Activated CD4-positive, alpha-beta memory T cell treated with anti-CD3 and anti-CD28 coated beads, Interleukin-2, amount 10 ng/mL, durations not matched to agents 7 days and 5 days (primary cell): ENCODE measurements at regions of chr16 and their contacts with region 1.

Region 1: DNA sequence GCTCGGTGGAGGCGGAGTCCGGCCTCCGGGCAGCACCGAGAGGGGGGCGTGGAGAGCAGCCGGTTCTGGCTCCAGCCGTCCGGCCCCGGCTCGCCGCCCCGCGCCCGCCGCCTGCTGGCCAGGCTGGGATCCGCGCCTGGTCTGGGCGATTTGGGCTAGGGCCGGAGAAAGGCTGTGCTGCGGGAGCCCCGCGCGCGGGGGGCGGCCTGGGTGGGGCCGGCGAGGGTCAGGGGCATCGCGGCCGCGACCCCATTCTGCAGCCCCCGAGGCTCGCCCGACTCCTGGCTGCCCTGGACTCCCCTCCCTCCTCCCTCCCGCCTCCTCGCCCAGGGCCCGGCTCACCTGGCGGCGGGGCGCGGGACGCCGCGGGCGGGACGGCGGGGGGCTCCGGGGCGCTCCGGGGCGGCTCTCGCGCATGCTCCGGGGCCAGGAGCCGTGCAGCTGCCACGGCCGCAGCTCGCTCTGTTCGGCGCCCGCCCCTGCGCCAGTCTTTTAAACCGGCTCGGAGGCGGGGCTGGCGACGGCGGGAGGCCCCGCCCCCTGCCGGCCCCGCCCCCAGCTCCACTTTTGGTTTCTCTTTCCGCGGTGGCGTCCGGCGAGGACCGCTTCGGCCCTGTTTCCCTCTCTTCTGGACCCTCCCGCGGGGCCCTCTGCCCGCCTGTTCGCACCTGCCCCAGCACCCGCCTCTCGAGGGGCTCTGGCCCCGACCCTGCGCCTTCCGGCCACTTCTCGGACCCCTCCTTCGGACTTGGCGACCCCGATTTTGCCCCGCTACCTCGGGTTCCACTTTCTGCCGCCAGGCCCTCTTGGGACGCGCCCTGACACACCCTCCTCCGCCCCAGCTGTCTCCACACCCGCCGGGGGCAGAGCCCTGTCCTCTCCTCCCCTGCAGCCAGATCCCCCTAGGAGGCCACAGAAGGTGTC is at the start of gene SOCS1:
- DNase-seq: peak; percentile 92
- H3K4me3 Mint-ChIP-seq: peak within 1 kb of the TSS; percentile 94
- H3K27ac Mint-ChIP-seq: peak within 1 kb of the TSS; percentile 94
- H3K4me1 Mint-ChIP-seq: peaks cover 51% of the 10 kb centered on the region
- H3K27me3 Mint-ChIP-seq: peaks cover 12% of the 10 kb centered on the region
- total RNA-seq, gene SOCS1: 136 to 142 TPM

Region 2: GRCh38 chr16:10981697-10982216 is 274.2 kb before region 1 on chr16:
- CTCF ChIA-PET with region 1: interaction called, 50 read pairs
- POLR2A ChIA-PET with region 1: interaction called, 309 read pairs
- DNase-seq: peak; percentile 77
- H3K4me3 Mint-ChIP-seq: peak overlapping the region; percentile 60
- H3K27ac Mint-ChIP-seq: peak overlapping the region; percentile 87
- H3K4me1 Mint-ChIP-seq: peaks cover 90% of the 10 kb centered on the region
- H3K27me3 Mint-ChIP-seq: no peaks in the 10 kb centered on the region

Region 3: DNA sequence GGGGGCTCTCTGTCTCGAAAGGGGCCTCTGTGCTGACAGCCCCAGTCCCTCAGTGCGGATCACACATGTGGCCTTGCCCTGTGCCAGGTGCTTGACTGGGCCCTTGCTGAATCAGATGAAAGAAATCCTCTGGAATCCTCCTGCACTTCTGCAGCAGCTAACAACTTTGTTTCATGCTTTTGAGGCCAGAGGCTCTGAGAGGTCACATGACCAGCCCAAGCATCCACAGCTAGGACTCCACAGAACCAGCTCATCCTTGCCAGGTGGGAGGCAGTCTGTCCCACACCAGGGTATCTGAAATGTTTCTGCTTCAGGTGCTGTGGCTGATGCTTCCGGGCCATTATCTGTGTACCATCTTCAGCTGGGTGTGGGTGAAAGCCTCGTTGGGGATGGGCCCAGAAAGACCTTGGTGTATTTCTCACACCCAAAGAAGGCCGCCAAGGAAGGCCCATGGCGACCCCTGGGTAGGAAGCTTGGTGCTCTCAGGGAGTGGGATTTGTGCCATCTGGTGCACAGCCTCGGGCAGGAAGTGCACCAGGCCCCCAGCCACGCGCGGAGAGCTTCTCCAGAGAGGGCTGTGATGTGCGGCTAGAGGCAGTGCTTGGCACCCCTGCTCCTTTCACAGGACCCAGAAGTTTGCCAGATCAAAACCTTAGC is 167.8 kb before region 1 on chr16:
- CTCF ChIA-PET with region 1: interaction called, 4 read pairs
- POLR2A ChIA-PET with region 1: interaction called, 46 read pairs
- DNase-seq: peak; percentile 52
- H3K4me3 Mint-ChIP-seq: no peak overlapping the region
- H3K27ac Mint-ChIP-seq: peak overlapping the region; percentile 76
- H3K4me1 Mint-ChIP-seq: peaks cover 75% of the 10 kb centered on the region
- H3K27me3 Mint-ChIP-seq: no peaks in the 10 kb centered on the region

Region 4: DNA sequence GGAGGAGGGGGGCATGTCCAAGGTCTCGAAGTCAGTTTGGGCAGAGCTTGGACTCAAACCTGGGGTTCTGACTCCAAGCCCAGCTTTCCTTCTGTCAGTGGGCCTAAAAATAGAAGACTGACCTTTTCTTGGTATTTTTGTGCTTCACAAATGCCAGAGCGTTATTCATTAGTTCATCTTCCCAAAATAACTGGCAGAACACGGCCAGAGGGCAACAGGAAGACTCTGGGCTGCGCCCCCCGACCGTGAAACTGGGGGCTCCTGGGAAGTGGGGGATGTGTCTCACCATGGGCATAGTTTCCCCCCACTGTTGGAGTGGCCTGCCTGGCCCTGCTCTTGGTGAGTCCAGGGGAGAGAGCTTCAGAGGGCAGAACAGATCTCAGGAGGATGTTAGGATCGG is 94.0 kb before region 1 on chr16:
- CTCF ChIA-PET with region 1: interaction called, 19 read pairs
- POLR2A ChIA-PET with region 1: interaction called, 28 read pairs
- DNase-seq: no peak
- H3K4me3 Mint-ChIP-seq: no peak overlapping the region
- H3K27ac Mint-ChIP-seq: peak overlapping the region; percentile 70
- H3K4me1 Mint-ChIP-seq: peaks cover 88% of the 10 kb centered on the region
- H3K27me3 Mint-ChIP-seq: no peaks in the 10 kb centered on the region

Region 5: GRCh38 chr16:11232852-11233726 is 22.9 kb before region 1 on chr16:
- CTCF ChIA-PET with region 1: interaction called, 23 read pairs
- POLR2A ChIA-PET with region 1: interaction called, 302 read pairs
- DNase-seq: peak; percentile 95
- H3K4me3 Mint-ChIP-seq: peak overlapping the region; percentile 66
- H3K27ac Mint-ChIP-seq: peak overlapping the region; percentile 98
- H3K4me1 Mint-ChIP-seq: peaks cover 86% of the 10 kb centered on the region
- H3K27me3 Mint-ChIP-seq: no peaks in the 10 kb centered on the region

Region 6: DNA sequence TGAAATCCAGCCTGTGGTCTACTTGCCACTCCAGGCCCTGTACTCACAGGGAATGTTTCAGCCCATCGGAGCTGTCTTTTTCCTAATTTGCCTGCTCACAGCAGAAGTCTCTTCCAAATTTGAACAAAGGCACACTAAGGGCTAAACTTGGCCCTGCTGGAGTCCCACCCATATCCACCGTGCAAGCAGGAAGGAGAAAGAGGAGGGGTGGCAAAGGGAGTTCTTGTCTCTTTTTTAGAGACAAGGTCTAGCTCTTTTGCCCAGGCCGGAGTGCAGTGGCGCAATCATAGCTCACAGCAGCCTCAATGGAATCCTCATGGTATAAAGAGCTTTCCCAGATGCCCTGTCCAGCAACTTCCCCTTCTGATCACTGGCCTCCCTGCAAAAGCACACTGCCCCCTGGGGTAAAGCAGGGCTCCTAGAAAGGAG is 27.8 kb after region 1 on chr16:
- CTCF ChIA-PET with region 1: no interaction called
- POLR2A ChIA-PET with region 1: no interaction called
- DNase-seq: no peak
- H3K4me3 Mint-ChIP-seq: no peak overlapping the region
- H3K27ac Mint-ChIP-seq: no peak overlapping the region
- H3K4me1 Mint-ChIP-seq: peaks cover 8% of the 10 kb centered on the region
- H3K27me3 Mint-ChIP-seq: peaks cover 45% of the 10 kb centered on the region

Region 7: GRCh38 chr16:11345040-11345862 is 89.3 kb after region 1 on chr16 and contains the start of gene RMI2:
- CTCF ChIA-PET with region 1: interaction called, 7 read pairs
- POLR2A ChIA-PET with region 1: interaction called, 26 read pairs
- DNase-seq: peak; percentile 98
- H3K4me3 Mint-ChIP-seq: peak within 1 kb of the TSS; percentile 89
- H3K27ac Mint-ChIP-seq: peak within 1 kb of the TSS; percentile 77
- H3K4me1 Mint-ChIP-seq: peaks cover 57% of the 10 kb centered on the region
- H3K27me3 Mint-ChIP-seq: no peaks in the 10 kb centered on the region
- total RNA-seq, gene RMI2: 45.9 to 46.6 TPM